Activated CD4-positive, alpha-beta memory T cell treated with anti-CD3 and anti-CD28 coated beads, Interleukin-2, amount 10 ng/mL, durations not matched to agents 7 days and 5 days (primary cell): ENCODE measurements at regions of chr3 and their contacts with region 1.

Region 1: GRCh38 chr3:170811928-170812591 is 57.9 kb downstream of the RPL22L1 start:
- DNase-seq: peak; percentile 68
- H3K4me3 Mint-ChIP-seq: no peak overlapping the region
- H3K27ac Mint-ChIP-seq: no peak overlapping the region
- H3K4me1 Mint-ChIP-seq: peaks cover 4% of the 10 kb centered on the region
- H3K27me3 Mint-ChIP-seq: peaks cover 5% of the 10 kb centered on the region

Region 2: DNA sequence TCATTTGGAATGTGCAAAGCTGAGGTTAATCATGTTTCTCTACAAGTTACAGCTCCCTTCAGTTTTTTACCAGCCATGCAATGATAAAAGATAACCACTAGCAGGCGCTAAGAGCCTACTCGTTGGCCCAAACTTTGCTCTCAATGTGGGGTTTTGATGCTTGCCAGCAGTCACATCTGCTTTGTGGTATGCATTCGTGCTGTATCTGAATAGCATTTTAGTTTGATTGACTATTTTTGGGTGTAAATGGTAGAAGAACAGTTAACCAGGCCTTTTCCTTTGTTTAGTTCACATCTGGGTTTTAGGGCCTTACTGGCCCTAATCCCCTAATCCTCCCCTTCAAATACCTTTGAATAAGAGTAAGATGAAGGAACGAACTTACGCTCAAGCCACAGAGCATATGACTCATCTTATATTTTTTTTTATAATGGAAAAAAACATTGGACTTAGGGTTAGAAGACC is 397.8 kb before region 1 on chr3:
- CTCF ChIA-PET with region 1: interaction called, 120 read pairs
- POLR2A ChIA-PET with region 1: no interaction called
- DNase-seq: peak; percentile 41
- H3K4me3 Mint-ChIP-seq: no peak overlapping the region
- H3K27ac Mint-ChIP-seq: no peak overlapping the region
- H3K4me1 Mint-ChIP-seq: peaks cover 8% of the 10 kb centered on the region
- H3K27me3 Mint-ChIP-seq: peaks cover 27% of the 10 kb centered on the region

Region 3: DNA sequence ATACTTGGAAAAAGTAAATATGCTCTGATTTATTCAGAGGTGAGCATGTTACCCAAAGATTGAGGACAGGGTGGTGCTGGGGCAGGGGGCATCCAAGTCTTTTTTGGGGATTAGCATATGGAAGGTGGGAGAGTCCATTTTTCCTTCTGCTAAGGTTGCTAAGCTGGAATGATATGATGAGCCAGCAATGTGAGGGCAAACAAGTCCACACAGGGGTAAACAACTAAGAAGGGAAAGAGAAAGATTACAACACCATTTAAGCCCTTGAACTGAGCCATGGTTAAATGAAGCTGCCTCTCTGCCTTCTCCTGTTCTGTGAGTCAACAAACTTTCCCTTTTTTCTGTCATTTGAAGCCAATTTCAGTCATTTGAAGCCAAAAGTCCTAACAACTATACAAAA is 31.1 kb before region 1 on chr3:
- CTCF ChIA-PET with region 1: interaction called, 11 read pairs
- POLR2A ChIA-PET with region 1: no interaction called
- DNase-seq: no peak
- H3K4me3 Mint-ChIP-seq: no peak overlapping the region
- H3K27ac Mint-ChIP-seq: no peak overlapping the region
- H3K4me1 Mint-ChIP-seq: no peaks in the 10 kb centered on the region
- H3K27me3 Mint-ChIP-seq: peaks cover 35% of the 10 kb centered on the region

Region 4: DNA sequence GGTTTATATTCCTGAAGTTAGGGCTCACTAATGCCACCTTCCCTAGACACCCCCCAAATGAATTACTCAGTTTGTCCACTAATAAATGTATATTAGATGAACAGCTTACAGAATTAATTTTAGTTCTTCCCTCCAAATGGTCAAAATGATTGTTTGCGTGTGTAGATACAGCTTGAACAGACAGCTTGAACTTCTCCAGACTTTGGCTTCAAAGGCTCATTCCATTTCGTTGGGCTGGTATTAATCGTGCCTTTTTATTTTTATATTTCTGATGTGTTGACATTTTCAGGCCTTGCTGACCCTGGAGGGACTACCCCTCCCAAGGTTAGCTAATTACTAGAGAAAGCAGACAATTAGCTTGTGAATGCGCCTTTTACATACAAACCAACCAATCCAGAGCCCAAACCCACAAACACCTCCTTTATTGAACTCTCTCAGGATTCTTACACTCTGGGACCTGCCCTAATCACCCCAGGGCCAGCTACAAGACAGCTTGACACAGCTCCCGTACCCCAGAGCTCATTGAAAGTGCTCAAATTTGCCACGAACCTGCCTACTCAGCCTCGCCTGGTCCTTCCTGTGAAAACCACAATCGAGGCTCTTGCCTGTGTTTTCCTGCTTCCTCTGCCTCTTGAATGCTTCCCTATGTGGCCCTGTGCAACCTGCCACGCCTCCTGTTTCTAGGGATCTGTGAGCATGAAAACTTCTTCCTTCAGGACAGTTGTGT is 17.6 kb after region 1 on chr3:
- CTCF ChIA-PET with region 1: interaction called, 15 read pairs
- POLR2A ChIA-PET with region 1: no interaction called
- DNase-seq: no peak
- H3K4me3 Mint-ChIP-seq: no peak overlapping the region
- H3K27ac Mint-ChIP-seq: no peak overlapping the region
- H3K4me1 Mint-ChIP-seq: peaks cover 12% of the 10 kb centered on the region
- H3K27me3 Mint-ChIP-seq: peaks cover 40% of the 10 kb centered on the region

Region 5: DNA sequence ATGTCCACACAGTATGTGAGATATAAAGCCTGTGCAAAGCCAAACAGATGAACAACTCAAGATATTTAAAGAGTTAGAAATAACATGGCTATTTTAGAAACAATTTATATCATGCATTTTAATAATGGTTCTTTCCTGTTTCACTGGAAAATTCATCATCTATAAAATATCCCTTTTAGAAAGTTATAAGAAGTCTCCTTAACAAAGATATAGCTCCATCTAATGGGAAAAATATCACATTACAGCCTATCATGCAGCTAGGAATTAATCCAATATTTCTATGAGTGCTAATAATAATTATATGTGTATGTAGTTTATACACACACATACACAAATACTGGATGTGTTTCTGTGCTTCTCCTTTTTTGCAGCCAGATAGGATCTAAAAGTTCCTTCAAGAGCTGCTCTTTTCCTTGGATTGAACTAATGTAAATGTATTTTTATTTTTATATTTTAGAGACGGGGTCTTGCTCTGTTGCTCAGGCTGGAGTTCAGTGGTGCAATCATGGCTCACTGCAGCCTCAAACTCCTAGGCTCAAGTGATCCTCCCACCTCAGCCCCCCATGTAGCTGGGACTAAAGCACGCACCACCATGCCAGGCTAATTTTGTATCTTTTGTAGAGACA is 36.3 kb after region 1 on chr3:
- CTCF ChIA-PET with region 1: interaction called, 14 read pairs
- POLR2A ChIA-PET with region 1: no interaction called
- DNase-seq: no peak
- H3K4me3 Mint-ChIP-seq: no peak overlapping the region
- H3K27ac Mint-ChIP-seq: no peak overlapping the region
- H3K4me1 Mint-ChIP-seq: no peaks in the 10 kb centered on the region
- H3K27me3 Mint-ChIP-seq: peaks cover 32% of the 10 kb centered on the region

Region 6: GRCh38 chr3:170869645-170870593 is 57.9 kb after region 1 on chr3 and contains the start of gene RPL22L1:
- CTCF ChIA-PET with region 1: interaction called, 13 read pairs
- POLR2A ChIA-PET with region 1: interaction called, 6 read pairs
- DNase-seq: peak; percentile 95
- H3K4me3 Mint-ChIP-seq: peak within 1 kb of the TSS; percentile 92
- H3K27ac Mint-ChIP-seq: peak within 1 kb of the TSS; percentile 92
- H3K4me1 Mint-ChIP-seq: peaks cover 25% of the 10 kb centered on the region
- H3K27me3 Mint-ChIP-seq: no peaks in the 10 kb centered on the region
- total RNA-seq, gene RPL22L1: 98.9 to 99.2 TPM